Activated CD8-positive, alpha-beta memory T cell treated with anti-CD3 and anti-CD28 coated beads, Interleukin-2, amount 10 ng/mL, durations not matched to agents 7 days and 5 days (primary cell): ENCODE measurements at regions of chr1 and their contacts with region 1.

Region 1: DNA sequence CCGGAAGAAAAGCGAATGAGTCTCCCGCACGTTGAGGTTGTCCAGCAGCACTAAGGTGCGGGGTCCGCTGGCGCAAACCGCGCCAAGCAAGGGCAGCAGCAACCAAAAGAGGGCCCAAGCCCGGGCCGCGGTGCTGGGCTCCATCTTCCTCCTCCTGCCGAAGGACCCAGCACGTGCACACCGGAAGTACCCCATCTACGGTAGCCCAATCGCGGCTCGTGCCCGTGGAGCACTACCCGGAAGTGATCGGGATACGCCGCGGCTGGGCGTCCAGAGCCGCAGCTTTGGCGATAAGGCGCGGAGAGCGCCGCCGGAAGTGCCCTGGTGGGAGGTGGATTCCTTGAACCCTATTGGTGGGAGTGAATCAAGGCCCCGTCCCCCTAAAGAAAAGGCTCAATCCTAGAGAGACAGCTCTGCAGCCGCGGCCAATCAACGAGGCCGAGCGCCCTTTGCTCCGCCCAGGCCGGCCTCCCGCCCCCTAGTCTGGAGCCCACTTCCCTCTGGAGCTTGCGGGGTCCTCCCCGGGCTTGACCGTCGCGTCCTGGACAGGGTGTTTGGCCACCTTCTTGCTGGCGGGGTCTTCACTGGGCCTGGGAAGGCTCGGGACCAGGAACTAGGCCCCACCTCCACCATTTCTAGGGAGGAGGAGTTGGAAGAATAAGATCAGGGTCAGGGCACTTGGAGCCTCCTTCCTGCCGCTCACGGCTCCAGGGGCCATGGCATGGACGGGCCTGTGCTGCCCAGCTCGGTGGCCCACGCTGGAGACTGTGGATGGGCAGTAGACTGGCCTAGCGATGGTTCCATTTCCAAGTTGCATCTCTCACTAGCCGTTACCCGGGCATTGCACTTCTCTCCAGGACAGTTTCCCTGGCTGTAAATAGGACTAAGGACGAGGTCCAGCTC is at the start of gene DDOST:
- DNase-seq: peak; percentile 98
- ATAC-seq: peak; percentile 98
- H3K4me3 Mint-ChIP-seq: peak within 1 kb of the TSS; percentile 83
- H3K27ac Mint-ChIP-seq: peak within 1 kb of the TSS; percentile 99
- H3K4me1 Mint-ChIP-seq: peaks cover 37% of the 10 kb centered on the region
- H3K27me3 Mint-ChIP-seq: no peaks in the 10 kb centered on the region
- total RNA-seq, gene DDOST: 137 to 170 TPM

Region 2: DNA sequence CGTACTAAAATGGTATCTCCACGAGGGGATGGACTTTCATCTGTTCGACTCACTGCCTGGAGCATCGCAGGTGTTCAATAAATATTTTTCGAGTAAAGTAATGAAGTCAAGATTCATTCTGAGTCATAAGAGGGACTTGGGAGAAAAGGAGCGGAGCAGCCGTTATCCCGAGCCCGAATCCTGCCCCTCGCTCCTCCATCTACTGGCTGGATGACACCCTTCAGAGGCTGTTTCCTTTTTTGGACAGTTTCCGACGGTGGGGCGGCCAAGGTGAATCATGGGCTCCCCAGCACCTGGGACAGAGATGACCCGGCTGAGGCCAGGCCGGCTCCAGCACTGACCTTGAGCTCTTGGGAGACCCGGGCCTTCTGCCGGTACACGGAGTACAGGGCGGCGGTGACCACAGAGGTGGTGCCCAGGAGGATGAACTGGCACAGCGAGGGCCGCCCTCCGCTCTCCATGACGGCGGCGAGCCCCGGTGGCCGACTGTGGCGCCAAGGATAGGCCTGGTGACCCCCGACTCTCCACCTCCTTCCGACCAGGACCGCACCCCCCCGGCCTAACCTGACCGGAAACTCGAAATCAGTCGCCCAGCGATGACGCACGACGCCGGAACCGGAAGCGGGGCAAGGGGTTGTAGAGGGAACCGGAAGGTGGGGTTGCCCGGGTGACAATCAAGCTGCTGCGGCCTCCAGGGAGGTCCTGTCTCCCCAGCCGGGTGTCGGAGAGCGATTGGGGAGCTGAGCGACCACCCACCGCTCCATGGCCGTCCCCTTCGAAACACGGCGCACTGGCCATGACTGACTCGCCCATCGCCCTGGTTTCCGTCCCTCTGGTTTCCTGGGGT is 153.7 kb before region 1 on chr1 and contains the start of gene MUL1:
- CTCF ChIA-PET with region 1: interaction called, 10 read pairs
- DNase-seq: peak; percentile 97
- ATAC-seq: peak; percentile 97
- H3K4me3 Mint-ChIP-seq: peak within 1 kb of the TSS; percentile 87
- H3K27ac Mint-ChIP-seq: peak within 1 kb of the TSS; percentile 87
- H3K4me1 Mint-ChIP-seq: peaks cover 22% of the 10 kb centered on the region
- H3K27me3 Mint-ChIP-seq: no peaks in the 10 kb centered on the region
- total RNA-seq, gene MUL1: 14.9 to 19.5 TPM